Posterior vena cava (tissue), 2 donors: ENCODE measurements at regions of chr7 and their contacts with region 1.

Region 1: DNA sequence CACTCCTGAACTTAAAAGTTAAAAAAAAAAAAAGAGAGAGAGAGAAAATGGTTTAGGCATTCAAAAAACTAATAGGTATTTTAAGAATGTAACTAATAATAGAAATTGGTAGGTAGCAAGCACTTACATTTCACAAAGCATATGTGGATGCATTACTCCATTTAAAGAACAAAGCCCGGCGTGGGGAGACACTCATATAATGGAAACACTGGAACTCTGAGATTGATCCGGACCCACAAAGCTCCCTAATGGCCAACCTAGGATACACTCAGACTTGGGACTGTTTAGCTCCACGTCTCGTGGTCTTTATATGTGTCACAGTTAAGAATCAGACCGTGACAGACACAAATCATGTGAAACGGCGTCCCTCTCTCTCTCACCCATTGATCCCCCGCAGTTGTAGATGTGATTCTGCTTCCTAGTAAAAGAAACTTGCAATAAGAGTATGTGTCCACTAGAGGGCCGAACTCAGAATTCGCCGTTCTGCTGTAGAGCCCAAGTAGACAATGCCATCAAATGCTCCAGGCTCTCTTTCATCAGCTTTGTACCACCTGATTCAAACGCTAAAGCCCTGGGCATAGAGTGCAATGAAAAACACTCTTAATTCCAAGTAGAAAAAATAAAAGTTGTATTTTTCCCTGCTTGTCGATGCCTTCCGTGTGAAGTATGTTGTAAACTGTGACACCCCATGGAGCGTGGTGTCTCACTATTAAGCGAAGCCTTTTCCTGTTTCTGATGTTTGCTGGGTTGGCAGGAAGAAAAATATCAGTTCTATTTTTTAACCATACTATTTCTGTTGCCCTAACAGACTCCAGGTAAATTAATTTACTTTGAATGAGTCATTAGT is 429.0 kb upstream of the MTPN start:
- DNase-seq: no peak

Region 2: GRCh38 chr7:135111379-135111778 is 1294.8 kb before region 1 on chr7:
- intact Hi-C with region 1: loop called in 1 of 2 experiments (anchors 10 kb)
- DNase-seq: no peak

Region 3: GRCh38 chr7:136275794-136276193 is 130.4 kb before region 1 on chr7:
- intact Hi-C with region 1: no loop called
- DNase-seq: no peak